GM12878 (cell line): ENCODE measurements at regions of chr14 and their contacts with region 1.

Region 1: GRCh38 chr14:101964297-101965144 is at the start of gene DYNC1H1:
- DNase-seq: peak; percentile 27
- ATAC-seq: peak; percentile 87
- H3K4me3 ChIP-seq: peak within 1 kb of the TSS; percentile 79
- H3K27ac ChIP-seq: peak within 1 kb of the TSS; percentile 78
- H3K4me1 ChIP-seq: peaks cover 4% of the 10 kb centered on the region
- H3K27me3 ChIP-seq: no peaks in the 10 kb centered on the region
- CTCF ChIP-seq: no peak
- EP300 ChIP-seq: no peak
- POLR2A ChIP-seq: peak; percentile 97
- RAD21 ChIP-seq: no peak
- polyA plus RNA-seq, gene DYNC1H1: 38.4 to 54.0 TPM

Region 2: DNA sequence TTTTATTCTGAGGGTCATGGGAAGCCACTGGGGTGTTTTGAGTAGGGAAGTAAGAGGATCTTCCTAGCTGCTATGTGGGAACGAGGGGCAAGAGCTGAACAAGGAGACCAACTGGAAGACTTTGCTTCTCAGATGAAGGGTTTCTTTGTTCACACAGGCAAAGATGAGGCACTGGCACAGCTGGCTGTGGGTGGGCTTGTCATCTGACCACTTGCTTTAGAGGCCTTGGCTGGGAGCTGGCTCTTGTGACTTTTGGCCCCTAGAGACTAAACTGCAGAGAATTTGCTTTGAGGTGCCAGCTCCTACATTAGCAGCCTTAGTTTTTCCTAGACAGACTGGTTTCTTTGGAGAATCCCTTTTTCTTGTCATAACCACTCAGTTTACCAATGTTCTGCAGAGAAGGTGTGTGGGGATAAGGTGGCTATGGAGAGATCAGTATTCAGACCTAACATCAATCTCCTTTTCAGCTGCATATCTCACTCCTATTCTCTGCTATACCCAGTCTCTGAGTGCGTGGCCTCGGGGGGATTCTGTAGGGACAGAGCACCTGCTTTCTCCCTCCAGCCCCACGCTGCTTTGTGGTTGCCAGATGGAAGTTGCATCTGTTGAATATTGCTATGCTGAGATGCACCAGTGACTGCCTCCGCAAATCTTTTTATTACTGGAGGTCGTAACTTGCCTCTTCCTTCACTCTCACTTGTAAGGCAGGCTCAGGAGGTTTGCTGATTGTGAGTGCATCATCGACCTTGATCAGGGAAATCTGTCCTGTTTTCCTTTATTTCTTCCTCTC is 190.3 kb before region 1 on chr14:
- CTCF ChIA-PET with region 1: interaction called, 19 read pairs
- POLR2A ChIA-PET with region 1: no interaction called
- RAD21 ChIA-PET with region 1: interaction called, 3 read pairs
- SMC1A ChIA-PET with region 1: interaction called, 28 read pairs
- in situ Hi-C with region 1: no loop called
- intact Hi-C with region 1: loop called (anchors 5 kb)
- DNase-seq: no peak
- ATAC-seq: no peak; the same call in 2 of the 3 replicates
- H3K4me3 ChIP-seq: no peak overlapping the region
- H3K27ac ChIP-seq: no peak overlapping the region
- H3K4me1 ChIP-seq: peaks cover 19% of the 10 kb centered on the region
- H3K27me3 ChIP-seq: no peaks in the 10 kb centered on the region
- CTCF ChIP-seq: no peak
- EP300 ChIP-seq: no peak
- POLR2A ChIP-seq: no peak
- RAD21 ChIP-seq: no peak

Region 3: DNA sequence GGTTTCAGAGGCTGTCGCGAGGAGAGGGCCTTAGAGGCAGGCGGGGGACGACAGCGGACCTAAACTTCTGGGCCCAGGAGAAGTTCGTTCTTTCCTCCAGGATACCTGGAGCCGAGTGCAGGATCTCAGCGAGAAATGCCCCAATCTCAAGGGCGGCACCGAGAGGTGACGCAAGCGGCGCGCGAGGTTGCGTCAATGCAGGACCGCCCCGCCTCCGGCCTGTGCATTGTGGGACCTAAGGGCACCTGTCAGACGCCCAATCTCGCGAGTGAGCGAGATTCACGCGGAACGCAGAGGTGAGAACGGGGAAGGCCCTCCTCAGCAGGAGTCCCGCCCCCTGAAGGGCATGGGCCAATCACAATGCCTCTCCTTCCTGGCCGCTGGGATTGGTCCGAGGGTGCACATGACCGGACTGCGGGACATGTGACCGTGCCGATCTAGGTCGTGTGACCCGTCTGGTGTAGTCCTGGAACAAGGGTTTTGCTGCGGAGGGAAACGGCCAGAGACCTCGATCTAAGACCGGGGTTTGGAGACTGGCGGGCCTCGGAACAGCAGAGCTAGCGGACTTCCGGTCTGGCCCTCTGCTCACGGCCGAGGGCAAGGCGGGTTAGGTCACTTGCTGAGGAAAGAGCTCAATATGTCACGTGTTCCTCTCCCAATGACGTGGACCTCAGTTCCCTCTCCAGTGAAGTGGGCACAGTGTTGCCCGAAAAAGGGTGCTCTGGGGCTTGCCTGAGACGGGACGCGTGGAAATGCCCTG is 16.4 kb before region 1 on chr14:
- CTCF ChIA-PET with region 1: interaction called, 10 read pairs
- POLR2A ChIA-PET with region 1: interaction called, 6 read pairs
- RAD21 ChIA-PET with region 1: interaction called, 4 read pairs
- SMC1A ChIA-PET with region 1: no interaction called
- in situ Hi-C with region 1: no loop called
- intact Hi-C with region 1: loop called (anchors 2 kb)
- DNase-seq: peak; percentile 100
- ATAC-seq: peak; percentile 99
- H3K4me3 ChIP-seq: peak overlapping the region; percentile 99
- H3K27ac ChIP-seq: peak overlapping the region; percentile 83
- H3K4me1 ChIP-seq: peaks cover 2% of the 10 kb centered on the region; the same call in 1 of the 2 replicates
- H3K27me3 ChIP-seq: no peaks in the 10 kb centered on the region
- CTCF ChIP-seq: no peak; a peak in 1 of 6 replicates
- EP300 ChIP-seq: 0 out of 4 replicates have a peak, but pooled peaks of 1 of the 2 experiments have one; percentile 32
- POLR2A ChIP-seq: peak; percentile 91
- RAD21 ChIP-seq: no peak

Region 4: DNA sequence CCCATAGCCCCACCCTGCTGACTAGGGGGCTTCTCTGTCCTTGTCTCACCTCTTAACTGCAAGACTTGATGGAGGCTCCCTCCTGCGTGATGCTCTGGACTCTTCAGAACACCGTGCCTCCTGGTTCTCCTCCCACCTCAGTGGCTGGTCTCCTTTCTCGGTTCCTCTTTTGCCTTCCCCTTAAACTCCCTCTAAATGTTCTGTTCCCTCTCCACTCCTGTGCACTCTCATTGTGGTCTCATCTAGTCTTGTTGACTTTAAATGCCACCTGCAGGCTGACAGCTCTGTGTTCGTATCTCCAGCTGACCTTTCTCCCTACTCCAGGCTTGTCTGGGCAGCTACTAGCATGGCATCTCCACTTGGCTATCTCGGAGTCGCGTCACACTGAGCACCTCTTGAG is 28.2 kb after region 1 on chr14:
- CTCF ChIA-PET with region 1: interaction called, 44 read pairs
- POLR2A ChIA-PET with region 1: interaction called, 10 read pairs
- RAD21 ChIA-PET with region 1: interaction called, 33 read pairs
- SMC1A ChIA-PET with region 1: interaction called, 67 read pairs
- in situ Hi-C with region 1: no loop called
- intact Hi-C with region 1: loop called (anchors 1 kb)
- DNase-seq: peak; percentile 84
- ATAC-seq: peak; percentile 97
- H3K4me3 ChIP-seq: peak overlapping the region; percentile 37; the same call in 1 of the 2 replicates
- H3K27ac ChIP-seq: peak overlapping the region; percentile 29; the same call in 1 of the 2 replicates
- H3K4me1 ChIP-seq: peaks cover 29% of the 10 kb centered on the region
- H3K27me3 ChIP-seq: no peaks in the 10 kb centered on the region
- CTCF ChIP-seq: peak; percentile 24 to 61 (median 38); a peak in 4 of 6 replicates
- EP300 ChIP-seq: peak; percentile 43 to 86; a peak in 3 of 4 replicates
- POLR2A ChIP-seq: peak; percentile 44; the same call in 1 of the 2 replicates
- RAD21 ChIP-seq: peak; percentile 63

Region 5: DNA sequence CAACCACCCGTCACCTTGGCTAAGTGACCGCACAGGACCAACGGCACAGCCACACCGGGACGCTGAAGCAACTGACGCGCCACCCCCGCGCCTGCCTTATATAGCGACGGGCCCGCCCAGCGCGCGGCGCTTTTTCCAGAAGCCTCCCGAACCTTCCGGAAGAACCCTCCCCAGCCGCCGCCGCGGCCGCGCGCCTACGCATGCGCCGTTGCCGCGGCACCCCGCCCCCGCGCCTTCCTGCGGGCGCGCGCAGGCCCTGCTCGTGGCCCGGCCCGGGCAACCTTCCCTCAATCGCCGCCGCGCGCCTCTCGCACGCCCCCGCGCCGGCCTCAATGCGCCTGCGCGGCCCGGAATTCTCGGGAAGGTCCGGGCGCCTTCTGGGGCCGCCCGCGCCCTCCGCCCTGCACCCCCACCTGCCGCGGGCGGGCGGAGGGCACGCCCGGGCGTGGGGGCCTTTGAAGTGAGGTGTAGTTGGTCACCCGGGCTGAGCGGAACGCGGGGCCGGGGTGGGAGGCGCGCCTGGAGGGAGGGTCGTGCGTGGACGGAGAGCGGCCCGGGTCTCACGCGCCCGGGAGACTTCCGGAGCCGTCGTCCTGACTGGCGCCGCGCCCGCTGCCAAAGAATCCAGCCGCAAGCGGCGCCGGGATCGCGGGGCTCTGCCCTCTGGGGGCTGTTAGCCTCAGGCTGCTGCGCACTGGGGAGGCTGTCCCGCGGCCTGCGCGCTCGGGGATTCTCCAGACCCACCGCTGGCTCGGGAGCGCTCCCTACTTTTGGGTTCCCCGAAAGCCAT is 122.6 kb after region 1 on chr14 and contains the start of gene HSP90AA1:
- CTCF ChIA-PET with region 1: interaction called, 5 read pairs
- POLR2A ChIA-PET with region 1: interaction called, 6 read pairs
- RAD21 ChIA-PET with region 1: interaction called, 3 read pairs
- SMC1A ChIA-PET with region 1: interaction called, 4 read pairs
- in situ Hi-C with region 1: no loop called
- intact Hi-C with region 1: loop called (anchors 2 kb)
- DNase-seq: peak; percentile 60
- ATAC-seq: peak; percentile 70
- H3K4me3 ChIP-seq: peak within 1 kb of the TSS; percentile 98
- H3K27ac ChIP-seq: peak within 1 kb of the TSS; percentile 95
- H3K4me1 ChIP-seq: peaks cover 9% of the 10 kb centered on the region
- H3K27me3 ChIP-seq: no peaks in the 10 kb centered on the region
- CTCF ChIP-seq: 0 out of 6 replicates have a peak, but pooled peaks of 1 of the 3 experiments have one; percentile 15
- EP300 ChIP-seq: peak in 1 of 2 experiments; percentile 97; a peak in 1 of 4 replicates
- POLR2A ChIP-seq: peak; percentile 96
- RAD21 ChIP-seq: no peak
- polyA plus RNA-seq, gene HSP90AA1: 555 to 817 TPM

Region 6: GRCh38 chr14:102096214-102097114 is 131.9 kb after region 1 on chr14:
- CTCF ChIA-PET with region 1: interaction called, 58 read pairs
- POLR2A ChIA-PET with region 1: no interaction called
- RAD21 ChIA-PET with region 1: interaction called, 7 read pairs
- SMC1A ChIA-PET with region 1: interaction called, 13 read pairs
- in situ Hi-C with region 1: loop called (anchors 5 kb)
- intact Hi-C with region 1: loop called (anchors 1 kb)
- DNase-seq: no peak
- ATAC-seq: peak; percentile 88
- H3K4me3 ChIP-seq: no peak overlapping the region
- H3K27ac ChIP-seq: no peak overlapping the region
- H3K4me1 ChIP-seq: no peaks in the 10 kb centered on the region; the same call in 1 of the 2 replicates
- H3K27me3 ChIP-seq: no peaks in the 10 kb centered on the region
- CTCF ChIP-seq: peak; percentile 78 to 92 (median 88)
- EP300 ChIP-seq: no peak
- POLR2A ChIP-seq: no peak
- RAD21 ChIP-seq: peak; percentile 90

Region 7: DNA sequence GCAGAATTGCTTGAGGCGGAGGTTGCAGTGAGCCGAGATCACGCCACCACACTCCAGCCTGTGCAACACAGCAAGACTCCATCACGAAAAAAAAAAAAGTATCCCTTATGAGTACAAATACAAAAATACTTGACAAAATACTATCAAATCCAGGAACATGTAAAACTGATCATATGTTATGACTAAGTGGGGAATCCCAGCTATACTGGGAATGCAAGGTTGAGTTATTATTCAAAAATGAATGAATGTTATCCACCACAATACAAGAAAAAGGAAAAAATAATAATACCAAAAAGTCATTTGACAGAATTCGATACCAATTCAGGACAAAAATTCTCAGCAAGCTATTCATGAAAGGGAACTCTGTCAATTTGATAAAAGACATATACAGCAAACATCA is 307.9 kb after region 1 on chr14:
- CTCF ChIA-PET with region 1: no interaction called
- POLR2A ChIA-PET with region 1: no interaction called
- RAD21 ChIA-PET with region 1: no interaction called
- SMC1A ChIA-PET with region 1: no interaction called
- in situ Hi-C with region 1: no loop called
- intact Hi-C with region 1: no loop called
- DNase-seq: no peak
- ATAC-seq: no peak
- H3K4me3 ChIP-seq: no peak overlapping the region
- H3K27ac ChIP-seq: no peak overlapping the region
- H3K4me1 ChIP-seq: no peaks in the 10 kb centered on the region
- H3K27me3 ChIP-seq: no peaks in the 10 kb centered on the region
- CTCF ChIP-seq: no peak
- EP300 ChIP-seq: no peak
- POLR2A ChIP-seq: no peak
- RAD21 ChIP-seq: no peak

Region 8: DNA sequence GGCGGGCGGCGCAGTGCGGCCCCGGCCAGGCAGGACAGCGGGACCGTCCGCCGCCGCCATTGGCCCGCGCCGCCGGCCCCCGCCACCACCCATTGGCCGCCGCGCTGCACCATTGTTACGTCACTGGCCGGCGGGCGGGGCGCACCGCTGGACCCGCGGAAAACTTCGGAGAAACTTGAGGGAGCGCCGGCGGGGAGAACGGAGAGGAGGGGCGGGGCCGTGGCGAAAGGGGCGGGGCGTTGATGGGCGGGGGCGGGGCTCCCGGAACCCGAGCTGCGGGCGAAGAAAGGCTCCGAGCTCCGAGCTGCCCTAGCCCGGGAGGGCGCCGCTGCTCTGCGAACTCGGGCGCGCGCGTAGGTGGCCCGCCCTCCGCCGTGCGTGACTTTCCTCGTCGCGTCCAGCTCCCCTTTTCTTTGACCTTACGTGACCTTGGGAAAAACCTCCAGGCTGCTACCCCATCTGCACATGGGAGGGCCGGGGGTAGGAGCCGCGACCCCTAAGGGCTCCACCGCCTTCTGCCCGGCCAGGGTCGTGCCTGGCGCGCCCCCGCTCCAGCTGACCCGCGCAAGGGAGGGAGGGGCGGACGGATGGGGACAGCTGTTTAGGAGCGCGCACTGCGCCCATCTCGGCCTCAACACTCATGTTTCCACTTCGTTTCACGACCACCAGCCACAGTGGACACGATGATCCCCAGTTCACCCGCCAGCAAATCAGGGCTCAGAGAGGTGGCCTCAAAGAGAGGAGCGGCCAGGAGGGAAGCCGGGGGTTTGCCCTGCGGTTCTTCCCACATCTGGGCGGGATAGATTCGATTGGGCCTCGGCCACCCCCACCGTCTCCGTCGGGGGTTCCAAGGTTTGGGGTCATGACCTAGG is 545.5 kb after region 1 on chr14 and contains the start of gene ANKRD9:
- CTCF ChIA-PET with region 1: no interaction called
- POLR2A ChIA-PET with region 1: no interaction called
- RAD21 ChIA-PET with region 1: no interaction called
- SMC1A ChIA-PET with region 1: no interaction called
- in situ Hi-C with region 1: loop called (anchors 10 kb)
- intact Hi-C with region 1: loop called (anchors 10 kb)
- DNase-seq: peak; percentile 30
- ATAC-seq: peak; percentile 89
- H3K4me3 ChIP-seq: peak within 1 kb of the TSS; percentile 90
- H3K27ac ChIP-seq: no peak within 1 kb of the TSS
- H3K4me1 ChIP-seq: peaks cover 9% of the 10 kb centered on the region
- H3K27me3 ChIP-seq: no peaks in the 10 kb centered on the region
- CTCF ChIP-seq: no peak
- EP300 ChIP-seq: no peak
- POLR2A ChIP-seq: peak; percentile 54; the same call in 1 of the 2 replicates
- RAD21 ChIP-seq: no peak
- polyA plus RNA-seq, gene ANKRD9: 0.03 to 0.04 TPM

Region 9: GRCh38 chr14:102717276-102717675 is 752.8 kb after region 1 on chr14:
- CTCF ChIA-PET with region 1: no interaction called
- POLR2A ChIA-PET with region 1: no interaction called
- RAD21 ChIA-PET with region 1: no interaction called
- SMC1A ChIA-PET with region 1: no interaction called
- in situ Hi-C with region 1: no loop called
- intact Hi-C with region 1: no loop called
- DNase-seq: no peak
- ATAC-seq: no peak
- H3K4me3 ChIP-seq: no peak overlapping the region
- H3K27ac ChIP-seq: no peak overlapping the region
- H3K4me1 ChIP-seq: peaks cover 3% of the 10 kb centered on the region; the same call in 1 of the 2 replicates
- H3K27me3 ChIP-seq: no peaks in the 10 kb centered on the region
- CTCF ChIP-seq: no peak
- EP300 ChIP-seq: no peak
- POLR2A ChIP-seq: no peak
- RAD21 ChIP-seq: no peak